ENCODE measurements at regions of chr5 and their contacts with region 1.

Region 1: GRCh38 chr5:135565725-135566421 is 12.9 kb downstream of the CXCL14 start:
- DNase-seq: peak; percentile 83
- ATAC-seq: peak; percentile 79

Region 2: GRCh38 chr5:135829681-135830383 is 264.0 kb after region 1 on chr5:
- intact Hi-C with region 1: loop called (anchors 5 kb)
- DNase-seq: peak; percentile 78
- ATAC-seq: peak; percentile 66